Naive thymus-derived CD4-positive, alpha-beta T cell (primary cell): ENCODE measurements at regions of chr18 and their contacts with region 1.

Region 1: GRCh38 chr18:75209129-75209950 is at the start of gene PTGR3:
- DNase-seq: peak; percentile 55 to 78 (median 74)
- ATAC-seq: peak; percentile 67
- H3K4me3 ChIP-seq: peak within 1 kb of the TSS; percentile 89
- H3K4me3 Mint-ChIP-seq: peak within 1 kb of the TSS; percentile 96 to 100 (median 99)
- H3K27ac ChIP-seq: peak within 1 kb of the TSS; percentile 90
- H3K27ac Mint-ChIP-seq: peak within 1 kb of the TSS; percentile 94 to 99 (median 98)
- H3K4me1 ChIP-seq: peaks cover 26 to 33% of the 10 kb centered on the region in 2 donors
- H3K4me1 Mint-ChIP-seq: peaks cover 48 to 67% (median 56%) of the 10 kb centered on the region in 7 donors
- H3K27me3 ChIP-seq: no peaks in the 10 kb centered on the region
- H3K27me3 Mint-ChIP-seq: peaks cover 0 to 36% (median 0%) of the 10 kb centered on the region in 5 donors
- total RNA-seq, gene PTGR3: 25.1 to 59.1 (median 31.7) TPM

Region 2: DNA sequence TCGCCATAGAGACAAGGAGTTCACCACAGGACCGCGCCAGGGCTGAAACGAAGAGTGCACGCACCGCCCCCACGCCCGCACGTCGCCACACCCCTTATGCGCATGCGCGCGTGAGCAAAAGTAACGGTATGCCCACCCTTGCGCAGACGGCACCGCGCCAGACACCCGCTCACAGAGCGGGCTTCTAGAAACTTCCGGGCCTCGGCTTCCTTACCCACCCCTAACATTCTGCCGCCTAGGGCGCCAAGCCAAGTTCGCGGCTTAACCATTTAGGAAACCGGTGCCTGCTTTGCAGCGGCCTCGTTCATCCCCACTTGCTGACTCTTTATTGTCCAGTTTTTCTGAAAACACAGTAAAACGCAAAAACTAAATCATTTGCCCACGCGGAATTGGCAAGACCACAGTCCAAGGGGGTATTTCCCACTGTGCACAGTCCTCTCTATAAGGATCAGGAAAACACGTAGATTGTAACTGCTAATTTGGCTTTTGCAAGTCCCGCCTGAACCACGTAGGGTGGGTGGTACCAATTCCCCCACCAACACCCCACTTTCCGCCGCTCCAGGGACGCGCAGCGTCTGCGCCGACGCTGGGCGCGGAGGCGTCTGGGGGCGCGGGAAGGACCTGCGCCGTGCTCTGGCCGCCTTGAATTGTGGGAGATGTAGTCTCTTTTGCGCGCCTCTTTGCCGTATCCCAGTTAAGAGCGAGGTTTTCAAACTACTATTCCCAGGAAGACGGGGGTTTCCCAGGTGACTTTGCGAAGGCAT is 1061.4 kb before region 1 on chr18 and contains the starts of genes FBXO15 and TIMM21:
- CTCF ChIA-PET with region 1: no interaction called
- POLR2A ChIA-PET with region 1: no interaction called
- intact Hi-C with region 1: loop called (anchors 1 kb)
- DNase-seq: peak; percentile 92 to 97 (median 96)
- ATAC-seq: peak; percentile 91
- H3K4me3 ChIP-seq: peak within 1 kb of the TSS; percentile 82
- H3K4me3 Mint-ChIP-seq: peak within 1 kb of the TSS; percentile 95 to 100 (median 97)
- H3K27ac ChIP-seq: peak within 1 kb of the TSS; percentile 92
- H3K27ac Mint-ChIP-seq: peak within 1 kb of the TSS; percentile 98 to 100 (median 99)
- H3K4me1 ChIP-seq: peaks cover 15 to 25% of the 10 kb centered on the region in 2 donors
- H3K4me1 Mint-ChIP-seq: peaks cover 23 to 60% (median 55%) of the 10 kb centered on the region in 7 donors
- H3K27me3 ChIP-seq: no peaks in the 10 kb centered on the region
- H3K27me3 Mint-ChIP-seq: peaks cover 0 to 7% (median 0%) of the 10 kb centered on the region in 5 donors
- total RNA-seq, gene FBXO15: 1.1 to 4.9 (median 1.3) TPM
- total RNA-seq, gene TIMM21: 9.7 to 30.2 (median 27.9) TPM

Region 3: DNA sequence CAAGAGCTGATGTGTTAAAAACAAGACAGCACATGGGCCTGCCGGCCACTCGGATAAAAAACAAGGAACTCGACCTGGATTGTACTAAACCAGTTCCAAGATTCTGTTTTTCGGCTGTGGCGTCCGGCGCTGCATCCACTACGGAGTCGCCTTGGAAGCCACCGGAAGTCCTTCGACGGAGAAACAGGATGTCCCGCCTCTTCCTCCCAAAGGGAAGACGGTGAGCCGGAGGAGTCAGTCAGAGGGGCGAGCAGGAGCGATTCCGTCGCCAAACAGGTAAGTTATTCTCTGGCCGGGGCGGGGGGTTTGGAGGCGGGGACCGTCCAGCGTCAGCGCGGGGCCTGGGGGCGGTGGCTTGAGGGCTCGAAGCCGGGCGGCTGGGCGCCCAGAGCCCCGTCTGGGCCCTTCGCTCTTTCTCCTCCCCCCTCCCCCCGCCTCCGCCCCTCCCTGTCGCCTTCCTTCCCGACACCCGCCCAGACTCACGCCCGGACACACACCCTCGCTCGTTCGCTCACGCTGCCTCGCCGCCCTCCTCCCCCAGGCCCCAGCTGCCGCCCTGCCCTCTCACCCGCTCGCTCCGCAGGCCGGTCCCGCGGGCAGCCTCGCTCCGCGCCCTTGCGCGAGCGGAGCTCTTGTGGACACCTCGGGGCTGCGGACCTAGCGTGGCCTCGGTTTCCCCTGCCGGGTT is 611.5 kb before region 1 on chr18 and contains the start of gene ZNF407:
- CTCF ChIA-PET with region 1: no interaction called
- POLR2A ChIA-PET with region 1: interaction called, 25 read pairs
- intact Hi-C with region 1: loop called (anchors 1 kb)
- DNase-seq: peak; percentile 77 to 94 (median 90)
- ATAC-seq: peak; percentile 84
- H3K4me3 ChIP-seq: peak within 1 kb of the TSS; percentile 100
- H3K4me3 Mint-ChIP-seq: peak within 1 kb of the TSS; percentile 89 to 96 (median 95)
- H3K27ac ChIP-seq: peak within 1 kb of the TSS; percentile 88
- H3K27ac Mint-ChIP-seq: peak within 1 kb of the TSS; percentile 95 to 99 (median 98)
- H3K4me1 ChIP-seq: peaks cover 26 to 27% of the 10 kb centered on the region in 2 donors
- H3K4me1 Mint-ChIP-seq: peaks cover 33 to 74% (median 61%) of the 10 kb centered on the region in 7 donors
- H3K27me3 ChIP-seq: no peaks in the 10 kb centered on the region
- H3K27me3 Mint-ChIP-seq: no peaks in the 10 kb centered on the region
- total RNA-seq, gene ZNF407: 23.1 to 31.3 (median 29.7) TPM

Region 4: GRCh38 chr18:74951165-74951760 is 258.1 kb before region 1 on chr18:
- CTCF ChIA-PET with region 1: no interaction called
- POLR2A ChIA-PET with region 1: no interaction called
- intact Hi-C with region 1: loop called in 1 of 2 experiments (anchors 2 kb)
- DNase-seq: peak in 7 of 9 donors; percentile 18 to 65 (median 38)
- ATAC-seq: peak; percentile 93
- H3K4me3 ChIP-seq: no peak overlapping the region
- H3K4me3 Mint-ChIP-seq: peak overlapping the region in 9 of 10 donors; percentile 44 to 83 (median 68)
- H3K27ac ChIP-seq: no peak overlapping the region
- H3K27ac Mint-ChIP-seq: peak overlapping the region; percentile 39 to 93 (median 86)
- H3K4me1 ChIP-seq: peaks cover 0 to 19% of the 10 kb centered on the region in 2 donors
- H3K4me1 Mint-ChIP-seq: peaks cover 13 to 38% (median 32%) of the 10 kb centered on the region in 7 donors
- H3K27me3 ChIP-seq: no peaks in the 10 kb centered on the region
- H3K27me3 Mint-ChIP-seq: no peaks in the 10 kb centered on the region

Region 5: DNA sequence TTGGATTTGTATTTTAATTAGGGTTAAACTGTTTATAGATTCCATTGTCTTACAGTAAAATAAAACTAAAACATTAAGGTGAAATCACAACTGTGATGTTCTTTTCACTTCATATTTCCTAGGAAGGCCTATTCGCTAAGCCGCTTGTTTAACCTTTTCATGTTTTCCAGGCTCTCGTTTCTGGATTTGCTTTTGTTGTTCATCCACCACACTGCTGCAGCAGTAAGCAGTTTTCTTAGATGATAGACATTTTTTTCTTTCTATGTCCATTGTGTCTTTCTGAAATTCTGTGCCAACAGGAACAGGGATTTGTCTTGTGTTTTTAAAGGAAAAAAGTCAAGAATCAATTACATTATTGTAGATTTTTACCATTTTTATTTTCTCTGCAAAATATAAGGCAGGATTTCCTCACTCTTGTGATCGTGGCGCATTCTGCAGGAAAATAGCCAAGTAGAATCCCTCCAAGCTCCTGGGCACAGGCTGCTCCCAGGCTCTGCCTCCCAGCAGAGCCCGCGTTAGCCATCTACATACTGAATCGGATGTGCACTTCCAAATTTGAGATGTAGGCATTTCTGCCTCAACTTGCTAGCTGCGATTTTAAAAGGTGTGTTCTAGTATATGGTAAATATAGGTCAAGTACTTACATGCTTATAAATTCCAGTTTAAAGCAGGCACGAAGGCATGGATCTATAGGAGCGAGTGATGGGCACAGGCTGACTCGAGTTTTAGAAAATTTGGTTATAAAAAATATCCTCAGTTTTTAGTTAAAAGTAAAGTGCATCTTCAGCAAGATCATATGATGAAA is 11.4 kb after region 1 on chr18:
- CTCF ChIA-PET with region 1: interaction called, 4 read pairs
- POLR2A ChIA-PET with region 1: interaction called, 13 read pairs
- intact Hi-C with region 1: loop called in 1 of 2 experiments (anchors 1 kb)
- DNase-seq: no peak
- ATAC-seq: no peak
- H3K4me3 ChIP-seq: no peak overlapping the region
- H3K4me3 Mint-ChIP-seq: peak overlapping the region in 5 of 10 donors; percentile 5 to 71 (median 19)
- H3K27ac ChIP-seq: no peak overlapping the region
- H3K27ac Mint-ChIP-seq: peak overlapping the region in 7 of 9 donors; percentile 23 to 86 (median 77)
- H3K4me1 ChIP-seq: peaks cover 16 to 17% of the 10 kb centered on the region in 2 donors
- H3K4me1 Mint-ChIP-seq: peaks cover 15 to 99% (median 93%) of the 10 kb centered on the region in 7 donors
- H3K27me3 ChIP-seq: no peaks in the 10 kb centered on the region
- H3K27me3 Mint-ChIP-seq: no peaks in the 10 kb centered on the region

Region 6: DNA sequence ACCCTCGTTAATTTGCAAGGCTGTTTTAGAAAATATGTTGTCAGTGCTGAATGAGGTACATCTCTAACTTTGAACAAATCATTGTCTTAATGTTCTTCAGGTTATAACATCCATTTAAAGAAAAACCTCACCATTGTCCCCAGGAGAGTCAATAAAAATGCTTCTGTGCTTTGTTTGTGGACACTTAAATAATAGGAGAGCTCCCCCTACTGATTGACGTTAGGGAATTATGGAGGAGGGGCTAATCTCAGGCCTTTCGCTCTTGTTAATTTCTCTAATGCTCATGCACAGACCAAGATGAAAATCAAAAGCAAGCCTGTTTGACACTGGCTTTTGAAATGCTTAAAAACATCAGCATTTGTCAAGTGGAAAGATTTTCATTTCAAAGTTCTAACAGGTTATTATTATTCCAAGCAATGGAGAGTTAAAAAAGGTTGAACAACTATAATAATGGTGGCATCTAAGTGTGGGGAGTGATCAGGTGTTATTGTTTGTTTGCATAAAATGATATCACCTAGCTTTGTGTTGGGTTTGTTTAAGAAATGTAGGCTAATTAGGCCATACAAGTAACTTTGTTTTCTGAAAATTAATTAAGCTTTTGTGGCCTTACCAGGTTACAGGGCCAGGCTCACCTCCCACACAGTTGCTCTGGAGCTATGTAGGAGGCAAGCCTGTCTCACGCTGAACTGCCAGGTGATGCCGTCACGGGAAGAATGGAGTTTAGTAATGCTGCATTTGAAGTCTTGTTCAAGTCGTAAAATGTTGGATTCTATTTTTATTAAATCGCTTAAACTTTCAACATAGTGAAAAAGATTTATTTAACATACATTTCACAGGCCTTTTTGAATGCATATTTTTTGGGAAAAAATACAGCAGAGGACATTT is 269.9 kb after region 1 on chr18:
- CTCF ChIA-PET with region 1: no interaction called
- POLR2A ChIA-PET with region 1: interaction called, 4 read pairs
- intact Hi-C with region 1: loop called in 1 of 2 experiments (anchors 2 kb)
- DNase-seq: peak in 6 of 9 donors; percentile 15 to 56 (median 49)
- ATAC-seq: peak; percentile 69
- H3K4me3 ChIP-seq: no peak overlapping the region
- H3K4me3 Mint-ChIP-seq: no peak overlapping the region
- H3K27ac ChIP-seq: no peak overlapping the region
- H3K27ac Mint-ChIP-seq: no peak overlapping the region
- H3K4me1 ChIP-seq: no peaks in the 10 kb centered on the region
- H3K4me1 Mint-ChIP-seq: peaks cover 0 to 10% (median 6%) of the 10 kb centered on the region in 7 donors
- H3K27me3 ChIP-seq: peaks cover 0 to 3% of the 10 kb centered on the region in 2 donors
- H3K27me3 Mint-ChIP-seq: peaks cover 9 to 19% (median 13%) of the 10 kb centered on the region in 5 donors